Activated CD8-positive, alpha-beta T cell treated with anti-CD3 and anti-CD28 coated beads, Interleukin-2, amount 10 ng/mL, durations not matched to agents 7 days and 5 days (primary cell): ENCODE measurements at regions of chr3 and their contacts with region 1.

Region 1: GRCh38 chr3:187025656-187026316 is 95.5 kb downstream of the ST6GAL1 start:
- DNase-seq: peak; percentile 52
- ATAC-seq: peak; percentile 29
- H3K4me3 Mint-ChIP-seq: peak overlapping the region; percentile 79
- H3K27ac Mint-ChIP-seq: peak overlapping the region; percentile 90
- H3K4me1 Mint-ChIP-seq: peaks cover 61% of the 10 kb centered on the region
- H3K27me3 Mint-ChIP-seq: no peaks in the 10 kb centered on the region

Region 2: DNA sequence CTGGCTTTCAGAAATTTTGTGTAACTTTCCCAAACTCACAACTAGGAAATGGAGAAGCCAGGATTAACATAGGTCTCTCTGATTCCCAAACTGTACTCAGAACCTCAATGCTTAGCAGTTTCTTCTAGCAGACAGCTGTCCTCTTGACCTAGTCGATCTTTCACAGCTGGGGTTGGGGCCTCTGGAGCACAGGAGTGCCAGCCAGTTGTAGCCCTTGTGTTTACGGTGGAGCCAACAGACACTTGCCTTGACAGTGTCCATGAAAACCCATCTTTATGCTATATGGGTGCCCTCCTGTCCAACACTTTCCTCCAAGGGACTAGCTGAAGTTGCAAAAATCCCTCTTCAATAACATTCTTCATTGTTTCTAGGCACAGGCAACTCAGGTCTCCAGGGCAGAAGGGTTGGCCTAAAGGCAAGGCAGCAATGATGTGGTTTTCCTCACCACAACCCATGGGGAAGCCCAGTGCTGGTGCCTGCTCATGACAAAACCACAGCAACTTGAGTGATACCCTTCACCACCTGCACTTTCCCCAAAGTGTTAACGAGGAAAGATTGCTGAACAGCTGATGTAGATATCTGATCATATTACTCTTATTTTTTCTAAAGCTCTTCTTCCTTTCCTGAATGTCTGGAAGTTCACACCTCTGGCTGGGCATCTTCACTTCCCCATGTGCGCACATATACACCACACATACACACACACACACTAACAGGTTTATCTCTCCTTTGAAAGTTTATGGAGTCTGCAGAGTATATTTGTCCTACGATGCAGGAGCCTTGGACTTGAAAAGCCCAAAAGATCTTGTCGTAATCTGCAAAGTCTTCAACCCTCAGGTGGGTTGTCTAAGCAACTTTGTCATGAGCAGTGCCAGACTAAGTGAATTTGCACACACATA is 319.7 kb before region 1 on chr3:
- CTCF ChIA-PET with region 1: no interaction called
- POLR2A ChIA-PET with region 1: no interaction called
- DNase-seq: peak; percentile 76
- ATAC-seq: peak; percentile 99
- H3K4me3 Mint-ChIP-seq: no peak overlapping the region
- H3K27ac Mint-ChIP-seq: no peak overlapping the region
- H3K4me1 Mint-ChIP-seq: peaks cover 12% of the 10 kb centered on the region
- H3K27me3 Mint-ChIP-seq: peaks cover 58% of the 10 kb centered on the region

Region 3: DNA sequence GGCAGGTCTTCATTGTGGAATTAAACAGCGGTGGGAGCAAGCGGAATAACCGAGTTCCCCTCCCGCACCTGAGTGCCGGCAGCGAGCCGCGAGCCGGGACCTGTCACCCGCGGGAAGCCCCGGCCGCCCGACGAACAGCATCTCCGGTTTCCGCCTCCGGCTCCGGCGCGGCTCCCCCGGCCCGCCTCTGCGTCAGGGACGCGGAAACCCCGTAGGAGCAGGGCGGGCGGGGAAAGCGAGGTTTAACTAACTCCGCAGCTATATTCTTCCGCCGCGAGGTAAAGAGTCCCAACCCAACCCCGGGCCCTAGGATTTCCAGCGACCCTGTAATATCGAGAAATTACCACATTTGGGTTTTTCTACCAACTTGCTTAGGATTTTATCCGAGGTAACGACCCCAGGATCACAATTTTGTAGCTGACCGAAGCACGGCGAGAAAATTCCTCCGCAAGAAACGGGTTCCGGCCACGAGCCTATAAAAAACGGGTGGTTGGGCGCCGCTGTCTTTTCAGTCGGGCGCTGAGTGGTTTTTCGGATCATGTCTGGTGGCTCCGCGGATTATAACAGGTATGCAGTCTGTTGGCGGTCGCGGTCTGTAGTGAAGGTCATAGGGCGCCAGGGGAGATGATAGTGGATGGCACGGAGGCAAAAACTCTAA is 242.6 kb before region 1 on chr3 and contains the start of gene EIF4A2:
- CTCF ChIA-PET with region 1: no interaction called
- POLR2A ChIA-PET with region 1: interaction called, 31 read pairs
- DNase-seq: peak; percentile 93
- ATAC-seq: peak; percentile 76
- H3K4me3 Mint-ChIP-seq: peak within 1 kb of the TSS; percentile 91
- H3K27ac Mint-ChIP-seq: peak within 1 kb of the TSS; percentile 97
- H3K4me1 Mint-ChIP-seq: peaks cover 37% of the 10 kb centered on the region
- H3K27me3 Mint-ChIP-seq: no peaks in the 10 kb centered on the region
- total RNA-seq, gene EIF4A2: 365 to 383 TPM

Region 4: DNA sequence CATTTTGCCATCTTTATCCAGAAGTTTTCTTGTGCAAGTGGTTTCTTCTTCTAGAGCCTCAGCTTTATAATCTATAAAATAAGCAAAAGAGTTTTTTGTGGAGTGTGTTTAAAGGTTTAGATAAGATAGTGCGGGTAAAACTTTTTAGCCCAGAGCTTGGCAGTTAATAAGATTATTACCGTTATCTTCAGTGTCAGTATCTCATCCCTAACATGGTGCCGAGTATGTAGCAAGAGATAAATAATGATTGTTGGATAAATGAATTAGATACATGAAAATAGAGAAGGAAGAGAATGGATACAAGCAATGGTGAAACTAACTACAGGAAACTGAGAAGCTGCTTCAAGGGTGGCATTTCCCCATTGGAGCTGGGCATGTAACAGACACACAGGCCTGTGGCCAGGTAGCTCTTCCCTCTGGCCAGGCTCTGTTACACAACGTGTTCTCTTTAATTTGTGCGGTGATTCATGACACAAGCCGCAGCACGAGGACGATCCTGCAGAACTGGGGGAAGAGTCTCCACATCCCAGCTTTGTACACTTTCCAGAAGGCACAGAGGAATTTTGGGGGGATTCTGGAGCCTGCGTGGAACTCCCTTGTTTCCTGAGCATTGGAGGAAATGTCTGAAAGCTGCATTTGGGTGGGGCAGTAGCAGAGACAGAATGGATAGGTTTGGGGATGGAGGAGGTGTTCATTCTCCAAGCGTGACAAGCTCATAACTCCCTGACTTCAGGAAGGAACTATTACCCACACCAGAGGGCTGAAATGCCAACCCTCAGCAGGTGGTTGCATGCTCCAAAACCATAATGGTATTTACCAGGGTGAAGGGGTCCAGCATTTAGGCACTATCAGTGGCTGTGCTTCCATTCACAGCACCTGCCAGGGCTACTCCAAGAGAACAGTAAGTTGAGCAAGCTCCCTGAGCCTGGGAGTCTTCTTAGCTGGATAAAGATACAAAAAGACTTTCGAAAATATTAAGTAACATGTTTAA is 109.7 kb before region 1 on chr3:
- CTCF ChIA-PET with region 1: no interaction called
- POLR2A ChIA-PET with region 1: no interaction called
- DNase-seq: no peak
- ATAC-seq: peak; percentile 67
- H3K4me3 Mint-ChIP-seq: peak overlapping the region; percentile 24
- H3K27ac Mint-ChIP-seq: peak overlapping the region; percentile 63
- H3K4me1 Mint-ChIP-seq: peaks cover 64% of the 10 kb centered on the region
- H3K27me3 Mint-ChIP-seq: no peaks in the 10 kb centered on the region

Region 5: GRCh38 chr3:186940967-186941366 is 84.8 kb before region 1 on chr3:
- CTCF ChIA-PET with region 1: no interaction called
- POLR2A ChIA-PET with region 1: no interaction called
- DNase-seq: no peak
- ATAC-seq: no peak
- H3K4me3 Mint-ChIP-seq: no peak overlapping the region
- H3K27ac Mint-ChIP-seq: no peak overlapping the region
- H3K4me1 Mint-ChIP-seq: peaks cover 10% of the 10 kb centered on the region
- H3K27me3 Mint-ChIP-seq: no peaks in the 10 kb centered on the region

Region 6: GRCh38 chr3:187000711-187001151 is 25.1 kb before region 1 on chr3:
- CTCF ChIA-PET with region 1: interaction called, 14 read pairs
- POLR2A ChIA-PET with region 1: interaction called, 26 read pairs
- DNase-seq: no peak
- ATAC-seq: peak; percentile 65
- H3K4me3 Mint-ChIP-seq: no peak overlapping the region
- H3K27ac Mint-ChIP-seq: peak overlapping the region; percentile 73
- H3K4me1 Mint-ChIP-seq: peaks cover 57% of the 10 kb centered on the region
- H3K27me3 Mint-ChIP-seq: no peaks in the 10 kb centered on the region

Region 7: GRCh38 chr3:187012609-187013051 is 13.2 kb before region 1 on chr3:
- CTCF ChIA-PET with region 1: interaction called, 6 read pairs
- POLR2A ChIA-PET with region 1: interaction called, 14 read pairs
- DNase-seq: peak; percentile 63
- ATAC-seq: peak; percentile 88
- H3K4me3 Mint-ChIP-seq: peak overlapping the region; percentile 60
- H3K27ac Mint-ChIP-seq: peak overlapping the region; percentile 91
- H3K4me1 Mint-ChIP-seq: peaks cover 61% of the 10 kb centered on the region
- H3K27me3 Mint-ChIP-seq: no peaks in the 10 kb centered on the region

Region 8: DNA sequence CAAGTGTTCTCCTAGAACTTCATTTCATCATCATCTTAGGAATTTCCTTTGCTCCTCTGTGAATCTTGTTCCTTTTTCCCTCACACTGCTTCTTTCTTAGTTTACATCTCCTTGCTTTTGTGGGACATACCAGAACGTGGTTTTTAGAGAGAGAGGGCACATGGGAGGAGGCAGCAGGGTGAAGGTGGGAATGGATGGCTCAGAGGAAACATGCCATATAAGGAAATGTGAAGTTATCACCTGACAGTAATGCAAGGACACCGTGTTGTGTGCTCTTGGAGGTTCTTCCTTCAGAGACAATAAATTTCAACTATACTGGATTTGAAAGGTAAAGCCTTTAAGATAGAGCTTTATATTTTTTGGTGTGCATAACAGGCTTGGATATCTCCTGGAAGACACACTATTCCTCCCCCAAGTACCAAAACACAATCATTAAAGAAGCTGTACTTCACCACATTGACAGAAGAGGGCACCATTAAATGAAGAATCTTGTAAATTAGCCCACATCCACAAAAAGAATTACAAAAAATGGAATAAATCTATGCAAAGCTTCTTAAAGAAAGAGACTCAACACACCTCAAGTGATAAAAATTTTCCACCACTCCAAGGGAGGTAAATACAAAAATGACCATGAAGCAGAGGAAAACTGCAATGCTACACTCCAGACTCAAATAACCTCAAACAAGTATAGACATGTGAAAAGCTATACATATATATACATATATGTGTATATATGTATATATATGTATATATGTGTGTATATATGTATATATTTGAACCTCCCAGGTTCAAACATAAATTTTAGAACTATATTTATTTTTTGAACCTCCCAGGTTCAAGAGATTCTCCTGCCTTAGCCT is 87.4 kb after region 1 on chr3:
- CTCF ChIA-PET with region 1: interaction called, 18 read pairs
- POLR2A ChIA-PET with region 1: no interaction called
- DNase-seq: no peak
- ATAC-seq: no peak
- H3K4me3 Mint-ChIP-seq: no peak overlapping the region
- H3K27ac Mint-ChIP-seq: no peak overlapping the region
- H3K4me1 Mint-ChIP-seq: peaks cover 9% of the 10 kb centered on the region
- H3K27me3 Mint-ChIP-seq: no peaks in the 10 kb centered on the region